PC-3 (cell line): ENCODE measurements at regions of chr20 and their contacts with region 1.

Region 1: GRCh38 chr20:16368645-16369292 is 204.5 kb downstream of the KIF16B start:
- DNase-seq: peak; percentile 70
- ATAC-seq: peak; percentile 91
- H3K4me3 ChIP-seq: no peak overlapping the region
- H3K27ac ChIP-seq: peak overlapping the region; percentile 3; the same call in 1 of the 2 replicates
- H3K4me1 ChIP-seq: peaks cover 11% of the 10 kb centered on the region
- H3K27me3 ChIP-seq: no peaks in the 10 kb centered on the region
- CTCF ChIP-seq: 0 out of 2 replicates have a peak, but pooled peaks have one; percentile 19

Region 2: DNA sequence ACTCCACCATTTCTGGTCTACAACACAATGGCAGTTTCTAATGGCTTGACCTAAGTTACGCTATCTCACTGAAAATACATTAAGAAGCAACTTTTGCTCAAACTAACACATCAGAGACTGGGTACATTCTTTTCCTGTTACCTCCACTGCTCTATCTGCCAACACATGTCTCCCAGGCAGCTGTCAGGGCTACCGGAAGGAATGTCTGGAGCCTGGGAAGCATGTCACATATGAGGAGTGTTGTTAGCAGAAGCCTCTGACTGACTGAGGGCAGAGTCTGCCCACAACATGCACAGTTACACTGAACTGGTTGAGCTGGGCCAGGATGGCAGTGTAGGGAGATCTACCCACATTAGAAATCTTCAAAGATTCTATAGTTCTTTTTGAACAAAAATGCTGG is 60.0 kb before region 1 on chr20:
- CTCF ChIA-PET with region 1: no interaction called
- POLR2A ChIA-PET with region 1: no interaction called
- intact Hi-C with region 1: loop called (anchors 10 kb)
- DNase-seq: no peak
- ATAC-seq: no peak
- H3K4me3 ChIP-seq: no peak overlapping the region
- H3K27ac ChIP-seq: no peak overlapping the region
- H3K4me1 ChIP-seq: 0 out of 2 replicates have a peak, but pooled peaks cover under 1% of the 10 kb centered on the region
- H3K27me3 ChIP-seq: no peaks in the 10 kb centered on the region
- CTCF ChIP-seq: no peak